ENCODE measurements at regions of chr6 and their contacts with region 1.

Region 1: GRCh38 chr6:126804332-126805064 is 314.0 kb upstream of the RSPO3 start:
- DNase-seq: no peak
- H3K4me3 ChIP-seq: no peak overlapping the region
- H3K27ac ChIP-seq: no peak overlapping the region
- H3K4me1 ChIP-seq: no peaks in the 10 kb centered on the region
- H3K27me3 ChIP-seq: no peaks in the 10 kb centered on the region
- CTCF ChIP-seq: peak in 2 of 3 experiments; percentile 53 to 66; a peak in 2 of 4 replicates
- EP300 ChIP-seq: no peak
- POLR2A ChIP-seq: no peak
- RAD21 ChIP-seq: peak; percentile 73 to 77

Region 2: GRCh38 chr6:126657561-126658175 is 146.8 kb before region 1 on chr6:
- CTCF ChIA-PET with region 1: no interaction called
- POLR2A ChIA-PET with region 1: no interaction called
- DNase-seq: no peak
- H3K4me3 ChIP-seq: no peak overlapping the region
- H3K27ac ChIP-seq: no peak overlapping the region
- H3K4me1 ChIP-seq: no peaks in the 10 kb centered on the region
- H3K27me3 ChIP-seq: no peaks in the 10 kb centered on the region
- CTCF ChIP-seq: peak in 2 of 3 experiments; percentile 41 to 60; a peak in 2 of 4 replicates
- EP300 ChIP-seq: no peak
- POLR2A ChIP-seq: no peak
- RAD21 ChIP-seq: peak; percentile 81 to 82

Region 3: GRCh38 chr6:126824226-126824625 is 19.7 kb after region 1 on chr6:
- CTCF ChIA-PET with region 1: interaction called, 11 read pairs
- POLR2A ChIA-PET with region 1: no interaction called
- DNase-seq: no peak
- H3K4me3 ChIP-seq: no peak overlapping the region
- H3K27ac ChIP-seq: no peak overlapping the region
- H3K4me1 ChIP-seq: peaks cover 0 to 8% (median 5%) of the 10 kb centered on the region in 4 experiments; a peak in 4 of 7 replicates
- H3K27me3 ChIP-seq: no peaks in the 10 kb centered on the region; a peak in 1 of 7 replicates
- CTCF ChIP-seq: no peak
- EP300 ChIP-seq: no peak
- POLR2A ChIP-seq: no peak
- RAD21 ChIP-seq: no peak

Region 4: DNA sequence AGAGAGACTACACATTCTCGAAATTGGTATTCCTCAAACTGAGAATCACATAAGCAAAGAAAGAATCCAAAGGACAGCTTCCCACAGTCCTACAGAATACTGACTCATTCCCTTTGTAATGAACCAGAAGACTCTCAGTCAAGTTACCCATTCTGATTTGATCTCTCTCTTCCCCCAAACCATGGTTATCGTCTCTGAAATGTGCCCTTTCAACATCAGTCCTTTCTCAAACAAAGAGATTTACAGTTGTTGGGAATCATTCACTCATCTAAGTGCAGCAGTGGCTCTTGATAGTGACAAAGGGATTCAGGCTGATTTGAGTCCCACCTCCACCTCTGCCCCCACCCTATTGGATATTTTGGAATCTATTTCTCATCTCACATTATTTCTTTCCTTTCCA is 299.0 kb after region 1 on chr6:
- CTCF ChIA-PET with region 1: interaction called, 11 read pairs
- POLR2A ChIA-PET with region 1: no interaction called
- DNase-seq: no peak
- H3K4me3 ChIP-seq: no peak overlapping the region
- H3K27ac ChIP-seq: no peak overlapping the region
- H3K4me1 ChIP-seq: no peaks in the 10 kb centered on the region
- H3K27me3 ChIP-seq: no peaks in the 10 kb centered on the region
- CTCF ChIP-seq: no peak
- EP300 ChIP-seq: no peak
- POLR2A ChIP-seq: no peak
- RAD21 ChIP-seq: no peak